Activated CD4-positive, alpha-beta memory T cell treated with anti-CD3 and anti-CD28 coated beads for 36 hours (primary cell): ENCODE measurements at regions of chr6 and their contacts with region 1.

Region 1: DNA sequence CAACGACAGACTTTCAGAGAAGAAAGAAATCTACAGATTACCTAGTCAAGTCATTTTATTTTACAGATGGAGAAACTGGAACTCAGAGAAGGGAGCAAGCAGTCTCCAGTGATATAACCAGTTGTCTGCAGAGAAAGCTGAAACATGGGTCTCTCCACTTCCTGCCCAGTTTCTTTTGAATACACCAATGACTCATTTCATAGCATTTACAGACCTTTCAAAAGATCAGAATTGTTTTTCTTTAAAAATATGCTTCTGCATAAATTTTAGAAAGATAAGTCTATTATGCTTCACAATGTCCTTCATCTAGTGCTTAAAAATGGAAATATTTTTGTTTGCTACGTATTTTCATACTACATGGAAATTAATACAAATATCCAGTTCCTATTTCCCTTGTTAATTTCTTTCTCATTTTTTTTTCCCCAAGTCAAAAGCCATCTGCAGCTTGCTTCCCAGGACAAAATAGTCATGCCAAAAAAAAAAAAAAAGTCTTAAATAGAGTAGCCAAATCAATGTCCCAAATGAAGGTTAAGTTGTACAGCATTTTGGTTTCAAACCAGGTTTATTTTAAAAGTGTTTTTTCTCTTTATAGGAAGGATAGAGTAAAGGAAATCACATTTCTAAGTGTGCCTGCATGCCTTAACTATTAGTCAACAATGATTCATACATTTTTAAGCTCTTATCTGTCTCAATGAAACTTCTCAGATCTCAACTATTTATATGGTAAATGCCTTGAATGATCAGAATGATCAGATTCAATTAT is 36.9 kb downstream of the ARHGAP18 start:
- DNase-seq: no peak
- H3K4me3 Mint-ChIP-seq: peak overlapping the region; percentile 67
- H3K27ac Mint-ChIP-seq: peak overlapping the region; percentile 95
- H3K4me1 Mint-ChIP-seq: peaks cover 36% of the 10 kb centered on the region
- H3K27me3 Mint-ChIP-seq: no peaks in the 10 kb centered on the region

Region 2: GRCh38 chr6:129598244-129599187 is 74.5 kb before region 1 on chr6:
- CTCF ChIA-PET with region 1: interaction called, 6 read pairs
- POLR2A ChIA-PET with region 1: no interaction called
- intact Hi-C with region 1: loop called (anchors 2 kb)
- DNase-seq: no peak
- H3K4me3 Mint-ChIP-seq: no peak overlapping the region
- H3K27ac Mint-ChIP-seq: no peak overlapping the region
- H3K4me1 Mint-ChIP-seq: no peaks in the 10 kb centered on the region
- H3K27me3 Mint-ChIP-seq: no peaks in the 10 kb centered on the region

Region 3: DNA sequence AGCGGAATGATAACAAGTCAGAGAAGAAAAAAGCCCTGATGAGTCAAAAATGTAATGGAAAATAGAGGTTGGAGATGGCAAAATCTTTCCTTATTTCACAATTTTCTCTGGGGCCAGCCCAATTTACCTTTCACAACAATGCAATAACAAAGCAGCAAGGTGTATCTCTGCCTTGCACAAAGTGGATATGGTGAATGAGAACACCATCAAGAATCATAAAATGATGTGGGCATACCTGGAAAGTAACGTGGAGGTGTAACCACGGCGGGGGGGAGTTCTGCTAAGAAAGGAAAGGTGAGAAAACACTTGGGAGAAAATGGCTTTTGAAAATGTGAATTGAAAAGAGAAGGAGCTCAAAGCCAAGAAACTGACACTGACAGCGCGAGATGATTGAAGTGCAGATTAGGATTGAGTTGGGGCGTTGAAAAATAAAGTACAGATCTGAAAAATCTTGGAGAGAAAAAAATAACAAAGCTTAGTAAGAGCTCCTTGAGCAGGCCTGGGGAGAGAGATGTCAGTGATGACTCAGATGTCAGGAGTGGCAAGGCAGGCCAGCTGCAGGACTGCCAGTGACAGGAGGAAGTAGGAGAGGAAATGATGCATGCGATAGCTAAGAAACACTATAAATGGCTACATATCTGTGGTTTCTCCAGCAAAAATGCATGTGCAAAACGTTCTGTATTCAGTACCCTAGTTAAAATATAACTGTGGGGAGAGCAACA is 10.7 kb after region 1 on chr6:
- CTCF ChIA-PET with region 1: interaction called, 5 read pairs
- POLR2A ChIA-PET with region 1: interaction called, 12 read pairs
- intact Hi-C with region 1: loop called (anchors 1 kb)
- DNase-seq: peak; percentile 81
- H3K4me3 Mint-ChIP-seq: peak overlapping the region; percentile 30
- H3K27ac Mint-ChIP-seq: peak overlapping the region; percentile 76
- H3K4me1 Mint-ChIP-seq: peaks cover 44% of the 10 kb centered on the region
- H3K27me3 Mint-ChIP-seq: no peaks in the 10 kb centered on the region

Region 4: GRCh38 chr6:129709769-129710449 is 36.8 kb after region 1 on chr6 and contains the start of gene ARHGAP18:
- CTCF ChIA-PET with region 1: interaction called, 3 read pairs
- POLR2A ChIA-PET with region 1: interaction called, 5 read pairs
- intact Hi-C with region 1: loop called (anchors 1 kb)
- DNase-seq: peak; percentile 87
- H3K4me3 Mint-ChIP-seq: peak within 1 kb of the TSS; percentile 86
- H3K27ac Mint-ChIP-seq: peak within 1 kb of the TSS; percentile 33
- H3K4me1 Mint-ChIP-seq: peaks cover 33% of the 10 kb centered on the region
- H3K27me3 Mint-ChIP-seq: no peaks in the 10 kb centered on the region
- total RNA-seq, gene ARHGAP18: 7.0 to 9.2 TPM

Region 5: DNA sequence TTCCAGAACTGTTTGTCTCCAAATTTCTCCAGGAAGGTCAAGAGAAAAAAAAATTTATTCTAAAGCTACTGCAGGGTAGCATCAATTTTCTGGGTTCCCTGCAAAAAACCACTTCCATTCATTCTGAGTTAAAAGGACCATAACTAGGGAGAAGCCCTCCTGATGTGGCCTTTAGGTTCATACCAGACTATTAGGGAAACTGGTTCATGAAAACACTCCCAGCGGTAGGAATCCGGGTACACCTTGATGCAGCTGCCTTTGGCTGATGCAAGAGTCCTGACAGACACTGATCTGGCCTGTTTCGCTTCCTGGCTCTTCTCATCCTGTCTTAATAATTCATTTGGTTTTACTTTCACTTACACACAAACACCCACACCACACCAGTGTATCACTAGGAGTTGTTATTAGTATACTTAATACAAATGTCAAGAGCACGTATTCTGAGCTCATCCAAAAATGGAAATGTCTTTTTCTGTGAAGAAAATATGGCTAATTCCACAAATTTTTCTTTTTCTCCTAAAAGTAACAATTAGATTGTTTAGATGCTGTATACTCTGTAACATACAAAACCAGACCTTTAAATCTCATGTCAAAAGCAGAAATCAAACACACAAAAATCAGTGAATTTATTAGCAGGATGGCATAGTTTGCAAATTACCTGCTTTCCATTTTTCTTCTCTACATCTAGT is 75.3 kb after region 1 on chr6:
- CTCF ChIA-PET with region 1: interaction called, 7 read pairs
- POLR2A ChIA-PET with region 1: interaction called, 4 read pairs
- intact Hi-C with region 1: loop called (anchors 1 kb)
- DNase-seq: peak; percentile 70
- H3K4me3 Mint-ChIP-seq: peak overlapping the region; percentile 63
- H3K27ac Mint-ChIP-seq: peak overlapping the region; percentile 91
- H3K4me1 Mint-ChIP-seq: peaks cover 60% of the 10 kb centered on the region
- H3K27me3 Mint-ChIP-seq: no peaks in the 10 kb centered on the region

Region 6: DNA sequence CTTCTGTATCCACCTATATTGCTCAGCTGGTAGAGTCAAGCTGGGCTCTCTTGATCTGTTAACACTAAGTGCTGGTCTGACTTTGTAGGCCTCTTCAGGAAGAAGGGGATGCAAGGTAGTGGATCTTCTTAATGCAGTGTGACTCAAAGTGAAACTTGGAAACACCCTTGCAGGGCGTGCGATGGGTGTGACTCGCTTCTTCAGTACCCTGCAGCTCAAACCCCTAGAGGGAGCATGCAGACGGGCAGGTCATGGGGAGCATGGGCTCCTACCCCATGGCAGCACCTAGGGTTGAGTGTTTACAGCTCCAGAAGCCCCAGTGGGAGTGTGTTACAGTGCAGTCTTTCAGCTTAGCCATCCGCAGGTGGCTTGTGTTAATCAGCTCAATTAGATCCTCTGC is 550.4 kb after region 1 on chr6:
- CTCF ChIA-PET with region 1: no interaction called
- POLR2A ChIA-PET with region 1: no interaction called
- intact Hi-C with region 1: loop called (anchors 5 kb)
- DNase-seq: peak; percentile 82
- H3K4me3 Mint-ChIP-seq: peak overlapping the region; percentile 3
- H3K27ac Mint-ChIP-seq: peak overlapping the region; percentile 58
- H3K4me1 Mint-ChIP-seq: peaks cover 33% of the 10 kb centered on the region
- H3K27me3 Mint-ChIP-seq: no peaks in the 10 kb centered on the region

Region 7: DNA sequence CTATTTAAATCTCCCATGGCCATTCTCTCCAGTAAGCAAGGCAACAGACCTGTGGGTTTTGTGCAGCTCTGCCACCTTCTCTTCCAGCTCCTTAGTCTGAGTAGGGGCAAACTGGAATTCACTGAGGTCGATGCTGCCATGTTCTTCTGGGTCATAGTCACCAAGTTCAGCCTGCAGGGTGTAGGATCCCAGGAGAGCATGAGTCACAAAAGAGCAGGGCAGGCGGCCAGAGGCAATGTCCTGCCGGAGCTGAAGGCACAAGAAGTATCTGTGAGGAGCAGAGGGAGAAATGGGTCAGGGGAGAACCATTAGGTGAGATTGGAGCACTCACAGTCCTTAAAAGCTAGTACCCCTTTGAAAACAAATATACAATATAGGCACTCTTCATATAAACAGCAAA is 1227.9 kb after region 1 on chr6:
- CTCF ChIA-PET with region 1: no interaction called
- POLR2A ChIA-PET with region 1: no interaction called
- intact Hi-C with region 1: no loop called
- DNase-seq: no peak
- H3K4me3 Mint-ChIP-seq: no peak overlapping the region
- H3K27ac Mint-ChIP-seq: no peak overlapping the region
- H3K4me1 Mint-ChIP-seq: no peaks in the 10 kb centered on the region
- H3K27me3 Mint-ChIP-seq: no peaks in the 10 kb centered on the region